Activated B cell treated with CpG ODN at 0.5 μM for 24 hours (primary cell): ENCODE measurements at regions of chr15 and their contacts with region 1.

Region 1: GRCh38 chr15:56869573-56869972 is 48.9 kb upstream of the TCF12 start:
- DNase-seq: no peak
- ATAC-seq: no peak
- H3K4me3 Mint-ChIP-seq: no peak overlapping the region
- H3K27ac Mint-ChIP-seq: no peak overlapping the region
- H3K4me1 Mint-ChIP-seq: peaks cover 6% of the 10 kb centered on the region
- H3K27me3 Mint-ChIP-seq: no peaks in the 10 kb centered on the region
- CTCF ChIP-seq: no peak

Region 2: GRCh38 chr15:56491110-56491722 is 378.4 kb before region 1 on chr15:
- CTCF ChIA-PET with region 1: interaction called, 13 read pairs
- POLR2A ChIA-PET with region 1: no interaction called
- intact Hi-C with region 1: loop called (anchors 1 kb)
- DNase-seq: no peak
- ATAC-seq: peak; percentile 90
- H3K4me3 Mint-ChIP-seq: no peak overlapping the region
- H3K27ac Mint-ChIP-seq: no peak overlapping the region
- H3K4me1 Mint-ChIP-seq: no peaks in the 10 kb centered on the region
- H3K27me3 Mint-ChIP-seq: no peaks in the 10 kb centered on the region
- CTCF ChIP-seq: no peak

Region 3: DNA sequence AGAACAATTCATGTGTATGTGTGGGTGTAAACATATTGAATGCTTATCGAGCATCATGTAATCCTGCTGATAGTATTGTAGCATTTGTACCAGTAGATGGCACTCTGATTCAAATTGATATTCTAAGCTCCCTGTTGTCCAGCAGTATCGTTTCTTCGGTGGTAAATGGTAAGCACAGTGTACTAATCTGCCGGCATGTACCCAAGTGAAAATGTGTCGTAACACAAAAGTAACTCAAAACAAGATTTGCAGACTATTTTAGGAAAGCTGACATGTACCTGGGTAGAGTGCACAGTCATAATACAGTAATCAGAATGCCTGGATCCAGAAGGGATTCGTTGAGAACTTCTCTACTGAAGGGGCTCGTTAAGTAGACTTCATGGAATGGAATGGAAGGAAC is 372.9 kb before region 1 on chr15:
- CTCF ChIA-PET with region 1: interaction called, 13 read pairs
- POLR2A ChIA-PET with region 1: no interaction called
- intact Hi-C with region 1: loop called (anchors 1 kb)
- DNase-seq: no peak
- ATAC-seq: peak; percentile 81
- H3K4me3 Mint-ChIP-seq: peak overlapping the region; percentile 20
- H3K27ac Mint-ChIP-seq: no peak overlapping the region
- H3K4me1 Mint-ChIP-seq: peaks cover 4% of the 10 kb centered on the region
- H3K27me3 Mint-ChIP-seq: no peaks in the 10 kb centered on the region
- CTCF ChIP-seq: no peak